ENCODE measurements at regions of chr2 and their contacts with region 1.

Region 1: DNA sequence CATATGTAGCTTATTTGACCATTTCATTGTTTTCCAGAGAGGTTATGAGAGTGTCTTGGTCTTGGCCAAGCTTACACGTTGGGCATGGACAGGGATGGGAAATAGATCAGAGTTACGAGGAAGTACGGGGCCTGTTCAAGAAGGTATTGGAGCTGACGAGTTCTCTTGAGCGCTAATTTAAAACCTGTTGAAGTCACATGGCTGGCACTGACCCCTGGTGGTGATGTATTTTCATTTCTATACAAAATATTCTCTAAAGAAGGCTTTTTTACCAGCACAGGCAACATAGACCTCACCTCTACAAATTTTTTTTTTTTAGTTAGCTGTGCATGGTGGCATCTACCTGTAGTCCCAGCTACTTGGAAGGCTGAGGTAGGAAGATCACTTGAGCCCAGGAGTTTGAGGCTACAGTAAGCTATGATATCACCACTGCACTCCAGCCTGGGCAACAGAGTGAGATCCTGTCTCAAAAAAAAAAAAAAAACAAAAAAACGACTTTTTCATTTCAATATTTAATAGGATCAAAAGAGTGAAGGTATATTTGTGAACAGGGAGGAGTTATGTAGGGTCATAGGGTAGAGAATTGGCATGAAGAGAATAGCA is 19.6 kb downstream of the UGP2 start:
- DNase-seq: peak; percentile 26 to 73 (median 51)
- H3K4me3 ChIP-seq: no peak overlapping the region
- H3K4me3 Mint-ChIP-seq: no peak overlapping the region
- H3K27ac ChIP-seq: no peak overlapping the region
- H3K27ac Mint-ChIP-seq: peak overlapping the region in 6 of 8 donors; percentile 7 to 90 (median 33)
- H3K4me1 ChIP-seq: peaks cover 14% of the 10 kb centered on the region
- H3K4me1 Mint-ChIP-seq: peaks cover 26 to 51% (median 39%) of the 10 kb centered on the region in 3 donors
- H3K27me3 ChIP-seq: no peaks in the 10 kb centered on the region
- H3K27me3 Mint-ChIP-seq: no peaks in the 10 kb centered on the region

Region 2: DNA sequence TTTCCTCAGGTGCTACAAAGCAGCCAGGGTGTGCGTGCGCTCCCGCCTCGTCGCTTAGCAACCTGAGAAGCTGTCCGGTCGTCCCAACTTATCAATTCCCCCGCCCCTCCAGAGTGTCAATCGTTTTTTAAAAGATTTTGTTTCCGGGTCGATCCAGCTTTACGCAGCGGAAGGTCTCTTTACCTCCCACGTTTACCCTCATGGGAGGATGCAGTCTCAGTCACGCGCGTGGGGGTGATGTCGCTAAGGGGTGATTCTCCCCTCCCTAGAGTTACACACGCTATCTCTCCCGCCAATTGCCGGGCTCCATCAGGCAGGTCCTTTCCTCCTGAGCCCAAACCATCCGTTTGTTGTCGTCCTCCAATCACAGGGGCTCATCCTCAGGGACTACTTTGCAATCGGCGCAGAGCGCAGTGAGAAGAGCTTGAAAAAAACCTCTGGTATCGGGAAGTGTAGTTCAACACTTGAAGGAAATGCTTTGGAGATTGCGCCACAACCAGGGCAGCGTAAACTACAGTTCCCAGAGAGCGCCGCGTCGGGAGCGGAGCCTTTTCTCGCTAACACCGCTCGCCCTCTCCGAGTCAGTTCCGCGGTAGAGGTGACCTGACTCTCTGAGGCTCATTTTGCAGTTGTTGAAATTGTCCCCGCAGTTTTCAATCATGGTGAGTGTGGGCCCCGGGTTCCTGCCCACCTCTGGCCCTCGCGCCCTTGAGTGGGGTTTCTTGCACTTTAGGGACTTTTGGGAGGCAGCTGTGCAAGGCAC is 272.8 kb before region 1 on chr2 and contains the starts of genes MDH1 and WDPCP:
- CTCF ChIA-PET with region 1: interaction called, 4 read pairs
- POLR2A ChIA-PET with region 1: interaction called, 13 read pairs
- DNase-seq: peak; percentile 87 to 97 (median 96)
- H3K4me3 ChIP-seq: peak within 1 kb of the TSS; percentile 84
- H3K4me3 Mint-ChIP-seq: peak within 1 kb of the TSS; percentile 89 to 97 (median 93)
- H3K27ac ChIP-seq: peak within 1 kb of the TSS; percentile 87
- H3K27ac Mint-ChIP-seq: peak within 1 kb of the TSS; percentile 90 to 99 (median 97)
- H3K4me1 ChIP-seq: peaks cover 13% of the 10 kb centered on the region
- H3K4me1 Mint-ChIP-seq: peaks cover 32 to 60% (median 39%) of the 10 kb centered on the region in 3 donors
- H3K27me3 ChIP-seq: no peaks in the 10 kb centered on the region
- H3K27me3 Mint-ChIP-seq: no peaks in the 10 kb centered on the region
- total RNA-seq, gene MDH1: 182 to 191 TPM
- total RNA-seq, gene WDPCP: 7.2 to 7.9 TPM

Region 3: DNA sequence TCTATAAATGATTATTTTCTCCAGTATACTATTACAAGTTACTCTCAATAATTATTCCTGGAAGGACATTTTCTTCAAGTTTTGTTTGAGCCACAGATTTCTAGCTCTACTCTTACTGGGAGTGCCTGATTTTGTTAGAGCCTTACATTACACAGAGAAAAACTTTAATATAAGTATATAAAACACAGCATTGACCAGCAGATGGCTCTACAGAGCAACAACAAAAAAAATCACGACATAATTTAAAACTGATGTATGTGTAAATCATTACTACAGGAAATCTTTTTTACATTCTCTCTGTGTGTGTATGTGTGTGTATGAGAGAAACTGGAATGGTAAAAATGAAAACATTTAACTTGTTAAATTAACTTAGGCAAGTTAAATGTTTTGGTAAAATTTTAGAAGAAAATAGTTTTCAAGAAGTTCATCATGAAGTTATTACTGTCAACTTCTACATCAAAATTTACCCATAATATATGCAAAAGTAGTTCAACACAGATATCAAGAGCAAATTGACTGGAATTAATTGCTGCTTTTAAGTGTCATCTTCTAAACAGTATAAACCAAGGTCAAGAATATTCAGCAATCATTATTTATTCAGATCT is 169.2 kb before region 1 on chr2:
- CTCF ChIA-PET with region 1: interaction called, 23 read pairs
- POLR2A ChIA-PET with region 1: no interaction called
- DNase-seq: peak in 2 of 5 donors; percentile 24 to 46
- H3K4me3 ChIP-seq: no peak overlapping the region
- H3K4me3 Mint-ChIP-seq: no peak overlapping the region
- H3K27ac ChIP-seq: no peak overlapping the region
- H3K27ac Mint-ChIP-seq: no peak overlapping the region
- H3K4me1 ChIP-seq: no peaks in the 10 kb centered on the region
- H3K4me1 Mint-ChIP-seq: no peaks in the 10 kb centered on the region
- H3K27me3 ChIP-seq: no peaks in the 10 kb centered on the region
- H3K27me3 Mint-ChIP-seq: peaks cover 0 to 2% of the 10 kb centered on the region in 2 donors

Region 4: DNA sequence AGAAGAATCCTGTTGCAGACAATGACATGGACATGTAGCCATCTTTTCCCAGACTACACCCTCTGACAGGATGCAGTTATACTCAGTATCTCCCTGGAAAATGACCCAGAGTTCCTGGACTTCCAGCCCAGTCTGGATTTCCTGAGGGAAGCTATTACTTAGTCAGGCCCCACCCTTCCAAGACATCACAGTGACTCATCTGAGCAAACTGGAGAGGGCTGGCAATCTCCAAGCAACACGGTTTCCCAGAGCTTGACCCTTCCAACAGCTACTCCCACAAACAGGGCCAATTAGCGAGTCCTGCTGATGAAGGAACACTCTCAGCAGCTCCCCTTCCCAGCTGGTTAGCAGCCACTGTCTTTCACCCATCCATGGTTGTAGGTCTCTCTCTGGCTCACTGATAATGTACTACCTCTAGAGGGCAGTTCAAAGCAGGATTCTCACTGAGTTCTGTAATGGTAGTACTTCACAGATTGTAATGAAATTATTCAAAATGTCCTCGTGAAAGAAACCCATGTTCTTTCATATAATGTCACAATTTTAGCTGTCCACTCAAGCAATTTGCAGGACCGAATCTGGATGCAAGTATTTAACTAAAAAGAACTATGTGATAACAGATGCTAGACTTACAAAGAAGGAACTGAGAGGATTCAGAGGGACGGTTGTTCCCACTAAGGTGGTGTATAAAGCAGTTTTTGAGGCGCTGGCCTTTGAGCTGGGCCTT is 162.3 kb before region 1 on chr2:
- CTCF ChIA-PET with region 1: interaction called, 23 read pairs
- POLR2A ChIA-PET with region 1: no interaction called
- DNase-seq: peak in 1 of 5 donors; percentile 29
- H3K4me3 ChIP-seq: no peak overlapping the region
- H3K4me3 Mint-ChIP-seq: no peak overlapping the region
- H3K27ac ChIP-seq: no peak overlapping the region
- H3K27ac Mint-ChIP-seq: peak overlapping the region in 3 of 8 donors; percentile 19 to 61 (median 22)
- H3K4me1 ChIP-seq: no peaks in the 10 kb centered on the region
- H3K4me1 Mint-ChIP-seq: no peaks in the 10 kb centered on the region
- H3K27me3 ChIP-seq: no peaks in the 10 kb centered on the region
- H3K27me3 Mint-ChIP-seq: peaks cover 0 to 2% of the 10 kb centered on the region in 2 donors

Region 5: DNA sequence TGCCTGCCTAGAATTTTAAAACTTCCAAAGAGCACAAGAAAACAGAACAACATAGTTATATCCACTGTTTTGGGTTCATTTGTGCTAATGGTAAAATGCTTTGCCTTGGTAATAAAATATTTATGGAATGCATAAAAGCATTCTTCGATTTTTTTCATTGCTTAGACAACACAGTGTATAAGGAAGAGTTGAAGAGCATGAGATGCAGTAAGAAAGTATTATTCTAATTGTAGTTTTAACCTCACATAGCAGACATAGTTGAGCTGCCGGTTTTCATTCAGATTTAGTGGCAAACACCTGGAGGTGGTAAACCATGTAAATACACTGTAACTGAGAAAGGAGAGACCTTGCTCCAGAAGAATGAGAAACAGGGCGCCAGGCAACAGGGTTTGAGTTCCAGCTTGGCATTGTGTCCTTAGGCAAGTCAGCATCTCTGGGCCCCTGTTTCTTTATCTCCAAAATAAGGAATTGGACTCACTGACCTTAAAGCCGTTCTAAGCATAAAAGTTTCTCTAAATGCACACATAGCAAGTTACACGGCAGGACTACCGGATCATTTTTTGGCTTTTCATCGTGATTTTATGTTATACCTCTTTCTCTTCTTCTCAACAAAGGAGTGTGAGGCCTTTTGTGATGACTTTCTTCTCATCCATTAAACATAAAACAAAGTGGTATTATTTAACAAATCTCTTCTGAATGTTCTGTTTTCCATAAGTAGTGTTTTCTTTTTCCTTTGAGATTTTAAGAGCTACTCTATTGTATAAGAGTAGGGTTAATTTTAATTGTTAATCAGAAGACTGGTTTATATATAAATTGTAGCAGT is 11.7 kb before region 1 on chr2:
- CTCF ChIA-PET with region 1: interaction called, 18 read pairs
- POLR2A ChIA-PET with region 1: no interaction called
- DNase-seq: no peak
- H3K4me3 ChIP-seq: no peak overlapping the region
- H3K4me3 Mint-ChIP-seq: no peak overlapping the region
- H3K27ac ChIP-seq: no peak overlapping the region
- H3K27ac Mint-ChIP-seq: peak overlapping the region in 7 of 8 donors; percentile 1 to 71 (median 25)
- H3K4me1 ChIP-seq: peaks cover 51% of the 10 kb centered on the region
- H3K4me1 Mint-ChIP-seq: peaks cover 78 to 96% (median 90%) of the 10 kb centered on the region in 3 donors
- H3K27me3 ChIP-seq: no peaks in the 10 kb centered on the region
- H3K27me3 Mint-ChIP-seq: no peaks in the 10 kb centered on the region

Measured in CD8-positive, alpha-beta memory T cell (primary cell).